ENCODE measurements at regions of chr9 and their contacts with region 1.

Region 1: GRCh38 chr9:68919661-68920060 is 94.3 kb downstream of the PRKACG start:
- DNase-seq: no peak
- ATAC-seq: no peak
- H3K4me3 ChIP-seq: no peak overlapping the region
- H3K27ac ChIP-seq: no peak overlapping the region
- H3K4me1 ChIP-seq: peaks cover 0 to 9% (median 0%) of the 10 kb centered on the region in 12 donors
- H3K27me3 ChIP-seq: no peaks in the 10 kb centered on the region
- CTCF ChIP-seq: no peak
- POLR2A ChIP-seq: no peak

Region 2: GRCh38 chr9:68473790-68474189 is 445.9 kb before region 1 on chr9:
- intact Hi-C with region 1: no loop called
- DNase-seq: no peak
- ATAC-seq: no peak
- H3K4me3 ChIP-seq: no peak overlapping the region
- H3K27ac ChIP-seq: peak overlapping the region in 1 of 12 donors; percentile 13
- H3K4me1 ChIP-seq: peaks cover 0 to 53% (median 32%) of the 10 kb centered on the region in 12 donors
- H3K27me3 ChIP-seq: no peaks in the 10 kb centered on the region
- CTCF ChIP-seq: no peak
- POLR2A ChIP-seq: no peak

Region 3: DNA sequence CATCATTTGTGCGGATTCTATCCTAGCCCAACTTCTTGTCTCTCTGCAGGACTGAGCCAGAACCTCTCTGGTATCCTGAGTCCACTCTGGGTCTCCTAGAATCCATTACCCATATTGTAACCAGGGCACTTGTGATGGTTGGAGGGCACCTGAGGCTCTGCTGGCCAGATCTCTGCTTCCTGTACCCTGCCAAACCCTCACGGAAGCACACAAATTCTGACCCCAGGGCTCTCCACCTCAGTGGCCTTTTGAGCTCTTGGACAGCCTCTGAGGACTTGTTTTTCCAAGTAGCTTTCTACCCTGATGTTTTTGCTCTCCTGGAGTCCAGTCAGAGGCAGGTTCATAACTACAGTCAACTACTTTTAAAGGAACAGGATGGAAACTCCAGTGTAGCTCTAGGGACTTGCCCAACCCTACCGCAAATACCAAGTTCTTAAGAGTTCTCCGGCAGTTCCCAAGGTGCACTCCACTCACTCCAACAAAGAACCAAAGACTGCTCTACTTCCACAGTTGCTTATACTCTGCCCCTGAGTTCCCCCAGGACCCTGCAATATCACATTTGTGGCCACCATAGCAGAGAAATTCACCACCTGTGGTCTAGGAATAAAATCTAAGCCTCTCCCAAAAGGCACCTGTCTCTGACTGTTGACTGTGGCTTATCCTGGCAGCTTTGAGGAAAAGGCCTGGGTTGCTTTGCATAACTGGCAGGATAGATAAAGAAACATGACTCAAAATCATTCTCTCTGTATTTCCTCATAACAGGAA is 205.1 kb before region 1 on chr9:
- intact Hi-C with region 1: loop called in 1 of 10 experiments (anchors 10 kb)
- DNase-seq: no peak
- ATAC-seq: no peak
- H3K4me3 ChIP-seq: no peak overlapping the region
- H3K27ac ChIP-seq: no peak overlapping the region
- H3K4me1 ChIP-seq: peaks cover 0 to 44% (median 6%) of the 10 kb centered on the region in 12 donors
- H3K27me3 ChIP-seq: no peaks in the 10 kb centered on the region
- CTCF ChIP-seq: no peak
- POLR2A ChIP-seq: no peak

Region 4: DNA sequence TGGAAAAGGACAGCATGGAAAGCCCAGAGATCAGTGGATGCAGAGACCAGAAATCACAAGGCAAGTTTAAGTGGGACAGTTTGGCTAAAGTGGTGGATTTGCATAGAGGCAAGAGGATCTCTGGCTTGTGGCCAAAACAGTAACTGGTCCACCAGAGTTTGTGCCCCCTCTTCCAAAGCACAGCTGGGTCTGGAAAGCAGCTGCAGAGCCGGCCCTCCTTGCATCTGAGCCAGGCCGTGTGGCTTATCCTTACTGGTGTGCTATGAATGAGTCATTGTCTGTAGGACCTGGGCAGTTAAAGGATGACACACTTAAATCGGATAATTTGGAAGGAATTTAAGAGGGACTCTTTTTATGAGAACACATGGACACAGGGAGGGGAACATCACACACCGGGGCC is 68.0 kb before region 1 on chr9:
- intact Hi-C with region 1: loop called in 1 of 10 experiments (anchors 10 kb)
- DNase-seq: no peak
- ATAC-seq: peak in 3 of 4 donors; percentile 44 to 68 (median 65)
- H3K4me3 ChIP-seq: no peak overlapping the region
- H3K27ac ChIP-seq: no peak overlapping the region
- H3K4me1 ChIP-seq: peaks cover 0 to 15% (median 0%) of the 10 kb centered on the region in 12 donors
- H3K27me3 ChIP-seq: no peaks in the 10 kb centered on the region
- CTCF ChIP-seq: no peak
- POLR2A ChIP-seq: no peak

Region 5: GRCh38 chr9:68951879-68952659 is 32.4 kb after region 1 on chr9:
- intact Hi-C with region 1: no loop called
- DNase-seq: no peak
- ATAC-seq: peak in 3 of 4 donors; percentile 19 to 43 (median 35)
- H3K4me3 ChIP-seq: no peak overlapping the region
- H3K27ac ChIP-seq: peak overlapping the region in 1 of 12 donors; percentile 65
- H3K4me1 ChIP-seq: peaks cover 0 to 14% (median 0%) of the 10 kb centered on the region in 12 donors
- H3K27me3 ChIP-seq: no peaks in the 10 kb centered on the region
- CTCF ChIP-seq: no peak
- POLR2A ChIP-seq: no peak

Region 6: GRCh38 chr9:68974431-68974830 is 54.8 kb after region 1 on chr9:
- intact Hi-C with region 1: loop called in 1 of 10 experiments (anchors 10 kb)
- DNase-seq: no peak
- ATAC-seq: peak in 2 of 4 donors; percentile 21 to 23
- H3K4me3 ChIP-seq: peak overlapping the region; percentile 22 to 65 (median 58)
- H3K27ac ChIP-seq: peak overlapping the region; percentile 37 to 91 (median 82)
- H3K4me1 ChIP-seq: peaks cover 0 to 42% (median 9%) of the 10 kb centered on the region in 12 donors
- H3K27me3 ChIP-seq: no peaks in the 10 kb centered on the region
- CTCF ChIP-seq: no peak
- POLR2A ChIP-seq: no peak

Region 7: GRCh38 chr9:68991457-68991856 is 71.8 kb after region 1 on chr9:
- intact Hi-C with region 1: no loop called
- DNase-seq: no peak
- ATAC-seq: no peak
- H3K4me3 ChIP-seq: no peak overlapping the region
- H3K27ac ChIP-seq: no peak overlapping the region
- H3K4me1 ChIP-seq: peaks cover 0 to 10% (median 0%) of the 10 kb centered on the region in 12 donors
- H3K27me3 ChIP-seq: no peaks in the 10 kb centered on the region
- CTCF ChIP-seq: no peak
- POLR2A ChIP-seq: no peak